ENCODE measurements at regions of chr5 and their contacts with region 1.

Region 1: DNA sequence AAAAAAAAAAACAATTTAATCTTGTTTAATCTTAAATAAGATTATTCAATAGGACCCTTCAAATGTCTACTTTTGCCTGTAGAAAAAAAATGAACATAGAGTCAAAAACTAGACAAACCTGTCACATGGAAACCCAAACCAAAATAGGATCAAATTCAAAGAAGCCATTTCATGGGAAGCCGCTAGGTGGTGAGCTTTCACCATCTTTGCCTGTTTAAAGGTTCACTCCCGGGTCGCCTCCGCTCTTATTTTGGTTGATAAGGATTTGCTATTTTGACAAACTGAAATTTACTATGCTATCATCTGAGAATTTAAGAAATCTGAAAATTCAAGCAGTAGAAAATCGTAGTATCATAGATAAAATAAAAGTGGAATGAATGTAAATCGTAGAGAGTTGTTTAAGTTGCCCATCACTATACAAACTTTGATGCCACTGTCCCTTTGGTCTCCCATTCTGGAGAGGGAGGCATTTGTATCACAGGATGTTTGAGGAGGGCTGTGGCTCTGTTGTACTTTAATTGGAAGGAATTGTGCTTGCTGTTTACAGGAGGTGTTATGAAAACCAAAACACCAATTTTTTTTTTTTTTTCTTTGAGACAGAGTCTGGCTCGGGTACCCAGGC is 43.5 kb upstream of the DNAH5 start:
- DNase-seq: peak; percentile 44 to 62 (median 55)
- ATAC-seq: peak; percentile 65
- H3K4me3 ChIP-seq: no peak overlapping the region
- H3K27ac ChIP-seq: no peak overlapping the region
- H3K4me1 ChIP-seq: peaks cover 6% of the 10 kb centered on the region
- H3K27me3 ChIP-seq: no peaks in the 10 kb centered on the region
- CTCF ChIP-seq: peak; percentile 48 to 86 (median 84)
- POLR2A ChIP-seq: no peak

Region 2: GRCh38 chr5:13766236-13766635 is 221.7 kb before region 1 on chr5:
- intact Hi-C with region 1: no loop called
- DNase-seq: no peak
- ATAC-seq: no peak
- H3K4me3 ChIP-seq: no peak overlapping the region
- H3K27ac ChIP-seq: no peak overlapping the region
- H3K4me1 ChIP-seq: no peaks in the 10 kb centered on the region
- H3K27me3 ChIP-seq: no peaks in the 10 kb centered on the region
- CTCF ChIP-seq: no peak
- POLR2A ChIP-seq: no peak

Region 3: GRCh38 chr5:14264604-14265316 is 276.8 kb after region 1 on chr5:
- intact Hi-C with region 1: no loop called
- DNase-seq: peak; percentile 89 to 94 (median 90)
- ATAC-seq: peak; percentile 99
- H3K4me3 ChIP-seq: no peak overlapping the region
- H3K27ac ChIP-seq: peak overlapping the region in 3 of 4 donors; percentile 25 to 35 (median 34)
- H3K4me1 ChIP-seq: peaks cover 10% of the 10 kb centered on the region
- H3K27me3 ChIP-seq: no peaks in the 10 kb centered on the region
- CTCF ChIP-seq: peak in 2 of 7 experiments; percentile 9 to 10
- POLR2A ChIP-seq: peak in 1 of 3 donors; percentile 31

Region 4: DNA sequence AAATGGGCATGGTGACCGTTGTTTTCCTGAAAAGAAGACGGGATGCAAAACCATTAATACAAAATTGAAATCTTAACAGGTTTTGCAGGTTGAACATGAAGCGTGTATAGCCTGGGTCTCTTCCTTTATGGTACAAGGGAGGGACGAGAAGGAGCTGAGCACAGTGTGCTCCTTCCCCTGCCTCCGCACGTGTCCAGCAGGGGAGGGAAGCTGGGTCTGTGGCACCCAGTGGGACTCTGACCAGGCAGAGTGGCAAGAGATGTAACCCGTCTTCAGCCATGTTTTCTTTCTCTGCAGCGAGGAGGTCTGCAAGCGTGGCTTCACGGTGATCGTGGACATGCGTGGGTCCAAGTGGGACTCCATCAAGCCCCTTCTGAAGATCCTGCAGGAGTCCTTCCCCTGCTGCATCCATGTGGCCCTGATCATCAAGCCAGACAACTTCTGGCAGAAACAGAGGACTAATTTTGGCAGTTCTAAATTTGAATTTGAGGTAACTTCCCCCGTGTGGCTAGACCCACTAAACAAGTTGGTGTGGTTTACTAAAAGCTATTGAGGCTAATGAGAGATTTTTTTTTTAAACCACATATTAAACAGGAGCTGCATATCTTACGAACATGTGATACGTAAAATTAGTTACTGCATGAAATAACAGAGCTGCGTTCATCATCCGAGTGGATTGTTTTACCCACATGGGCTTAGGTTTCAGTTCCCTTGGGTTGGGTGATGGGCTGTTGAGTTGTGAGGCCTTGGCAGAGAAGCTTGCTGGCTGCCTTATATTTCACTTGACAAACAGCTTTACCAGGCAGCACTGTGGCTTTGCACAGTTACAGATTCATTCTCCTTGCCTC is 298.8 kb after region 1 on chr5:
- intact Hi-C with region 1: loop called (anchors 10 kb)
- DNase-seq: no peak
- ATAC-seq: no peak
- H3K4me3 ChIP-seq: no peak overlapping the region
- H3K27ac ChIP-seq: no peak overlapping the region
- H3K4me1 ChIP-seq: no peaks in the 10 kb centered on the region
- H3K27me3 ChIP-seq: no peaks in the 10 kb centered on the region
- CTCF ChIP-seq: no peak
- POLR2A ChIP-seq: no peak

Region 5: DNA sequence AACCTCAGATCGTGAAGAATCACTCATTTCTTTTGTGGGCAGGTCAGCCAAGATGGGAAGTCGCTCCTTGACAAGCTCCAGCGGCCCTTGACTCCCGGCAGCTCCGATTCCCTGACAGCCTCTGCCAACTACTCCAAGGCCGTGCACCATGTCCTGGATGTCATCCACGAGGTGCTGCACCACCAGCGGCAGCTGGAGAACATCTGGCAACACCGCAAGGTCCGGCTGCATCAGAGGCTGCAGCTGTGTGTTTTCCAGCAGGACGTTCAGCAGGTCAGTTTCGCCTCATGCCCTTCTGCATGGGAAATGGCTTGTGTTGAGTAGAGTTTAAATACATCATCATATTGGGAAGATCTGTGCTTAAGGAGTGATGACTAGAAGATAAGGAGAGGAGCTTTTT is 328.5 kb after region 1 on chr5:
- intact Hi-C with region 1: no loop called
- DNase-seq: no peak
- ATAC-seq: no peak
- H3K4me3 ChIP-seq: no peak overlapping the region
- H3K27ac ChIP-seq: no peak overlapping the region
- H3K4me1 ChIP-seq: peaks cover 11% of the 10 kb centered on the region
- H3K27me3 ChIP-seq: no peaks in the 10 kb centered on the region
- CTCF ChIP-seq: no peak
- POLR2A ChIP-seq: no peak